ENCODE measurements at regions of chr20 and their contacts with region 1.

Region 1: GRCh38 chr20:38221119-38221589 is 39.4 kb downstream of the KIAA1755 start:
- DNase-seq: peak; percentile 78
- H3K4me3 Mint-ChIP-seq: no peak overlapping the region
- H3K27ac Mint-ChIP-seq: no peak overlapping the region
- H3K4me1 Mint-ChIP-seq: no peaks in the 10 kb centered on the region
- H3K27me3 Mint-ChIP-seq: peaks cover 17% of the 10 kb centered on the region

Region 2: DNA sequence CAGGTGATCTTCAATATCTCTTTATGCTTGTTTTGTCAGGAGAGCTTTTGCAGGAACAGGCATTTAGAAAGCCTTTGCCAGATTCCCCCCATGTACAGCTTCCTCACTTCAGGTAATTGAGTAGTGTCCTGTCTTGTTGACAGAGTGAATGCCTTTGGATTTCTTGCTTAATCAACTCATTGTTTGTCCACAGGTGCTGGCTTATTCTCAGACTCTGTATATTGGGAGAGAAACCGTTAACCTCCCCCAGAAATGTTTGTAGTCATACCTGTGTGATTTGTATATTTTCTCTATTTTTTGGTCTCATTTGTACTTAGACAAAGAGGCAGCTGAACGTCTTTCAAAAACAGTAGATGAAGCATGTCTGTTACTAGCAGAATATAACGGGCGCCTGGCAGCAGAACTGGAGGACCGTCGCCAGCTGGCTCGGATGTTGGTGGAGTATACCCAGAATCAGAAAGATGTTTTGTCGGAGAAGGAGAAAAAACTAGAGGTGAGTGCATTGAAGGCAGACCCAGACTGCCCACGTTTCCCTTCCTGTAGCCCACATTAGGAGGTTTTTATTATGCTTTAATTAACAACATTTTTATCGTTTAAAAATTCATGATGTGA is 155.3 kb before region 1 on chr20:
- CTCF ChIA-PET with region 1: interaction called, 101 read pairs
- DNase-seq: no peak
- H3K4me3 Mint-ChIP-seq: no peak overlapping the region
- H3K27ac Mint-ChIP-seq: no peak overlapping the region
- H3K4me1 Mint-ChIP-seq: no peaks in the 10 kb centered on the region
- H3K27me3 Mint-ChIP-seq: no peaks in the 10 kb centered on the region

Region 3: DNA sequence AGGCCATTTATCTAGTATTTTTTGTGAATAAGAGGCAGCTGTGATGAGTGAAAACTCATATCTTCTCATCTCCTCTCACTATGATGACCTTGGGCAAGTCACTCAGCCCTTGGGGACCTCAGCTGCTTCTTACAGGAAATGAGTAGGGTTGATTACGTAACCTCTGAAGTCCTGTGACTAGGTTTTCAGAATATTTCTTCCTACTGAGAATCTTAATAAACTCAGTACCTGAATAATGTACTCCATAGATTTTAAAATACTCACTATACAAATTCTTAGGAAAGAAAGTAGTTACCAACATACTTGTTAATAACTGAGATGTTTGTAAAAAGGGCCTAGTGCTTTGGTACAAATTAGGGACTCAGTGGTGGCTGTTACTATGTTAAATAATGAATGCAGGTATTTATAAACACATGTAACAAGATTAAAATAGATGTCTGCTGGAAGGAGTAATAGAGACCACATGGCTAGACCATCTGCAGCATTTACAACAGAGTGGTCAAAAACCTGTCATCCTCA is 126.7 kb before region 1 on chr20:
- CTCF ChIA-PET with region 1: interaction called, 12 read pairs
- DNase-seq: peak; percentile 26
- H3K4me3 Mint-ChIP-seq: no peak overlapping the region
- H3K27ac Mint-ChIP-seq: peak overlapping the region; percentile 12
- H3K4me1 Mint-ChIP-seq: peaks cover 31% of the 10 kb centered on the region
- H3K27me3 Mint-ChIP-seq: no peaks in the 10 kb centered on the region

Region 4: GRCh38 chr20:38196592-38196991 is 24.6 kb before region 1 on chr20:
- CTCF ChIA-PET with region 1: interaction called, 11 read pairs
- DNase-seq: no peak
- H3K4me3 Mint-ChIP-seq: no peak overlapping the region
- H3K27ac Mint-ChIP-seq: no peak overlapping the region
- H3K4me1 Mint-ChIP-seq: no peaks in the 10 kb centered on the region
- H3K27me3 Mint-ChIP-seq: peaks cover 4% of the 10 kb centered on the region

Region 5: DNA sequence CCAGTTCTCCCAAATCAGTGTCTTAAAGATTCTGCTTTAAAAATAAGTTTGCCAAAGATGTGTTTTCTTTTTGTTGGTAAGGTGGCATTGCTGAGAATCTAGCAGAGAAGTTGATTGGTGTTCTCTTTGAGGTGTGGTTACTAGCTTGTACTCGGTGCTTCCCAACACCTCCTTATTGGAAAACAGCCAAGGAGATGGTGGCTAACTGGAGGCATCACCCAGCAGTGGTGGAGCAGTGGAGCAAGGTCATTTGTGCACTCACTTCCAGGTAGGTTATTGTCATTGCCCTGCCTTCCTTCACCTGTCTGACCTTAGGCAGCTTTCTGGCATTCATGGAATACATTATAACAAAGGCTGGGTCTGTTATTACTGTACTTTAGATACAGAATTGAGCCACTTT is 278.2 kb after region 1 on chr20:
- CTCF ChIA-PET with region 1: no interaction called
- DNase-seq: no peak
- H3K4me3 Mint-ChIP-seq: no peak overlapping the region
- H3K27ac Mint-ChIP-seq: no peak overlapping the region
- H3K4me1 Mint-ChIP-seq: no peaks in the 10 kb centered on the region
- H3K27me3 Mint-ChIP-seq: no peaks in the 10 kb centered on the region